ENCODE measurements at regions of chr19 and their contacts with region 1.

Region 1: GRCh38 chr19:5080030-5080654 is 111.2 kb downstream of the KDM4B start:
- DNase-seq: no peak
- ATAC-seq: no peak

Region 2: GRCh38 chr19:3700221-3701032 is 1379.7 kb before region 1 on chr19 and contains the start of gene PIP5K1C:
- intact Hi-C with region 1: no loop called
- DNase-seq: peak; percentile 95
- ATAC-seq: peak; percentile 88
- total RNA-seq, gene PIP5K1C: 46.9 TPM

Region 3: GRCh38 chr19:5147978-5148793 is 68.0 kb after region 1 on chr19:
- intact Hi-C with region 1: loop called (anchors 2 kb)
- DNase-seq: peak; percentile 60
- ATAC-seq: peak; percentile 44

Measured in sciatic nerve (tissue), 2 donors.